Activated CD4-positive, alpha-beta memory T cell treated with anti-CD3 and anti-CD28 coated beads for 36 hours (primary cell): ENCODE measurements at regions of chr14 and their contacts with region 1.

Region 1: DNA sequence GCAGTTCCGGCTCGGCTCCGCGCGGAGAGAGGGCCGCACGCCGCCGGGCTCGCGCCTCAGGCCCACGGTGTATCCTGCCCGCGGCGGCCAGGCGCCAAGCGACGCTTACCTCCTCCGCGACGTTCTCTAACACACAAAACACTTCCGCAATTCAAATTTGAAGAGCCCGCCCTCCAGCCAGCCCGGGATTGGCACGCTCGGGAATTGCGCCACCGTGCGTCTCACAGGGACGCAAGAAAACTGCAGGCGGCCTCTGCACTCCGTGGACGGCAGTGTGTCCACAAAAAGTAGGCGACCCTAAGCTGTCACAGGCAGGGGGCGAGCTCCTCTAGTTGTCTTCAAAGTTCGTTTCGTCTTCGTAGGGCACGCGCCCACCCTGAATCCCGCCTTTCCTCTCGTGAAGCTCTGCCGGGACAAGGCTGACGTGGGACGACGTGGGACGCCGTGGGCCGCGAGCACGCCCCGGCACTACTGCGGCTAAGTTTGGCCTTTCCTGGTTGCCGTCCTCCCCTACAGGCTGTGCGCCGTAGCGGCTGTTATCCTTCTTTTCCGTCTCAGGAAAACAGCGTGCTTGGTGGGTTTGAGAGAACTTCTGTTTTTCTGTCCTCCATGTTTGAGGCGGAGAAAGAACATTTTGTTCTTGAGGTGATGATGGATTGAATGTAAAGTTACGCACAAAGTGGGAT is at the start of gene MIS18BP1:
- DNase-seq: peak; percentile 96
- H3K4me3 Mint-ChIP-seq: peak within 1 kb of the TSS; percentile 86
- H3K27ac Mint-ChIP-seq: peak within 1 kb of the TSS; percentile 95
- H3K4me1 Mint-ChIP-seq: peaks cover 17% of the 10 kb centered on the region
- H3K27me3 Mint-ChIP-seq: no peaks in the 10 kb centered on the region
- total RNA-seq, gene MIS18BP1: 53.7 to 58.5 TPM

Region 2: DNA sequence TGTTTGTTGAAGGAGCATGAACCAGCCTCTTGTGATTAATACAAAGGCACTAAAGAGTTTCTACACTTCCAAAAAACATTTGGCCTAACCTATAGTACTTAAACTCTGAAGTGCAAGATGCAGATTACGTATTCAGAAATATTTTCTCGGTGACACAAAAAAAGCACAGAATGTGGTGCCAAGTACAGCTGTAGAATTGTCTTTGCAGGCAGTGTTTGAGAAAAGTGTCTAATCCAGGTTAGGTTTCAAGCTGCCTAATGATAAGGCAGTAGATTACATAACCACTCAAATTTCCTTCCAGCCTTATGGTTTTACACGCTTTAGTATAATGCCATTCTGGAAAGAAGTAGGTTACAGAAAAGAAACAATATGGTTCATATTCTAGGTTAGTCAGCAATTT is 496.7 kb before region 1 on chr14:
- CTCF ChIA-PET with region 1: no interaction called
- POLR2A ChIA-PET with region 1: no interaction called
- intact Hi-C with region 1: no loop called
- DNase-seq: no peak
- H3K4me3 Mint-ChIP-seq: no peak overlapping the region
- H3K27ac Mint-ChIP-seq: no peak overlapping the region
- H3K4me1 Mint-ChIP-seq: no peaks in the 10 kb centered on the region
- H3K27me3 Mint-ChIP-seq: no peaks in the 10 kb centered on the region

Region 3: GRCh38 chr14:44912041-44912869 is 341.0 kb before region 1 on chr14:
- CTCF ChIA-PET with region 1: no interaction called
- POLR2A ChIA-PET with region 1: no interaction called
- intact Hi-C with region 1: loop called (anchors 5 kb)
- DNase-seq: no peak
- H3K4me3 Mint-ChIP-seq: no peak overlapping the region
- H3K27ac Mint-ChIP-seq: no peak overlapping the region
- H3K4me1 Mint-ChIP-seq: peaks cover 6% of the 10 kb centered on the region
- H3K27me3 Mint-ChIP-seq: peaks cover 23% of the 10 kb centered on the region

Region 4: DNA sequence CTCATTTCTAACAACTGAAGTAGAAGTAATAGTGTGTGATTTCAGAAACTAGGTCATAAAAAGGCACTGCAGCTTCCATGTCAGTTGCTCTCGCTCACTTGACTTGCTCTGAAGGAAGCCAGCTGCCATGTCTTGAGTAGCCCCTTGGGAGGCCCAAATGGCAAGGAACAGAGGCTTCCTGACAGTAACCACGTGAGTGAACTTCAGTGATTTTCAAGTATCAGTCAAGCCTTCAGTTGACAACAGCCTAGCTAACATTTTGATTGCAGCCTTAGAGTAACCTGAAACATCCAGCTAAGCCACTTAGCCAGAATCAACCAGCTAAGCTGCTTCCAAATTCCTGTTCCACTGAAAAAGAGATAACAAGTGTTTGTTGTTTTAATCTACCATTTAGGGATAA is 264.5 kb before region 1 on chr14:
- CTCF ChIA-PET with region 1: no interaction called
- POLR2A ChIA-PET with region 1: no interaction called
- intact Hi-C with region 1: no loop called
- DNase-seq: no peak
- H3K4me3 Mint-ChIP-seq: no peak overlapping the region
- H3K27ac Mint-ChIP-seq: no peak overlapping the region
- H3K4me1 Mint-ChIP-seq: peaks cover 5% of the 10 kb centered on the region
- H3K27me3 Mint-ChIP-seq: no peaks in the 10 kb centered on the region

Region 5: DNA sequence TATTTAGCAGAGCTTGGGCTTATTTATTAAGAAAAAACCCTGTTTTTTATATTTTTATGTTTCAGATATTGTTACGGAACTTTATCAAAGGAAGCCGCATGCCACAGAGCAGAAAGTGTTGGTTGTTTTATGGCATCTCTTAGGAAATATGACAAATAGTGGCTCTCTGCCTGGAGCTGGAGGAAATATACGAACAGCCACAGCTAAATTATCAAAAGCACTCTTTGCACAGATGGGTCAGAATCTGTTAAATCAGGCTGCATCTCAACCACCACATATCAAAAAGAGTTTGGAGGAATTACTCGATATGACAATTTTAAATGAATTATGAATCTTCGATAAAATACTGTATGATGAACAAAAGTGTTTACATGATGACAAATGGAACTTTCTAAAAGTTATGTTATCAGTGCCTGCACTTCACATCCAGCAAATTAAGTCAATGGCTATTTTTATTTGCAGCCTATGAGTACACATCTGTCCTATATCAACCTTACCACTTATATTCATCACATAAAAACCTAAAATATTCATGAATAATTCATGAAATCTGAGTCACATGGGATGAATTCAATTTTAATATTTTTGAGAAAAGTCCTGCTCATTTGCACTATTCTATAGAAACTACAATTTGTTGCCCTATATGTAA is 179.9 kb before region 1 on chr14:
- CTCF ChIA-PET with region 1: no interaction called
- POLR2A ChIA-PET with region 1: no interaction called
- intact Hi-C with region 1: no loop called
- DNase-seq: no peak
- H3K4me3 Mint-ChIP-seq: no peak overlapping the region
- H3K27ac Mint-ChIP-seq: no peak overlapping the region
- H3K4me1 Mint-ChIP-seq: no peaks in the 10 kb centered on the region
- H3K27me3 Mint-ChIP-seq: no peaks in the 10 kb centered on the region

Region 6: DNA sequence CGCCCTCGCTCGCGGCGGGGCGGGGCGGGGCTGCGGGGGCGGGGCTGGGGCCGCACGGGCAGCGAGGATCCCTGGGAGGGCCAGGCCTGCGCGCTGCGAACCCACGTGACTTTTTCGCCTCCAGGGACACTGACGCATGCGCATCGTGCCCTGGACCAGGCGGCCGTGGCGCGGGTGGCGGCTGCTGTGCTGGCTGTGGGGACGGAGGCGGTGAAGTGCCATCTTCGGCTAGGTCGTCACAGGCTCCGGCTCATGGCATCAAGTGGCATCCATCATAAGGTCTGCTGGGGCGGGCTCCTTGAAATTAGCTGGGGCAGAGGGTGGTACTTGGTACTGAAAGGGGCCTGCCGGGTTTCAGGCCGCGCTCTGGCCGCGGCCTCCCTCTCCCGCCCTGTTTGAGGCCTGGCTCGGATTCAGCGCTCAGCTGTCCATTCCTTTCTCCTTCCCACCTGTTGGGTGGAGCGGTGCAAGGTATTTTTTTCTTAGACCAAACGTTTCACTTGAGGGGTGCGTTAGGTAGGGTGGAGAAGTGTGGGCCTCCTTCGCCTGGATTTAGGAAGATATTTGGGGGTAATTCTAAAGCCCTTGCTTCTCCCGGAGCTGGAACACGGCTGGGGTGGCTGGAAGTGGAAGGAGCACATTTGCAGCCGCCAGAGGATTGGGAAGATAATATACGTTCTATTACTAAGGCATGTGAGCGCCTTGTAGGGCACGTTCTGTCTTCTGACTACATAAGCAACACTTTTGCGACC is 169.1 kb before region 1 on chr14 and contains the start of gene PRPF39:
- CTCF ChIA-PET with region 1: no interaction called
- POLR2A ChIA-PET with region 1: no interaction called
- intact Hi-C with region 1: loop called (anchors 1 kb)
- DNase-seq: peak; percentile 97
- H3K4me3 Mint-ChIP-seq: peak within 1 kb of the TSS; percentile 95
- H3K27ac Mint-ChIP-seq: peak within 1 kb of the TSS; percentile 95
- H3K4me1 Mint-ChIP-seq: peaks cover 41% of the 10 kb centered on the region
- H3K27me3 Mint-ChIP-seq: no peaks in the 10 kb centered on the region
- total RNA-seq, gene PRPF39: 38.9 to 40.9 TPM

Region 7: DNA sequence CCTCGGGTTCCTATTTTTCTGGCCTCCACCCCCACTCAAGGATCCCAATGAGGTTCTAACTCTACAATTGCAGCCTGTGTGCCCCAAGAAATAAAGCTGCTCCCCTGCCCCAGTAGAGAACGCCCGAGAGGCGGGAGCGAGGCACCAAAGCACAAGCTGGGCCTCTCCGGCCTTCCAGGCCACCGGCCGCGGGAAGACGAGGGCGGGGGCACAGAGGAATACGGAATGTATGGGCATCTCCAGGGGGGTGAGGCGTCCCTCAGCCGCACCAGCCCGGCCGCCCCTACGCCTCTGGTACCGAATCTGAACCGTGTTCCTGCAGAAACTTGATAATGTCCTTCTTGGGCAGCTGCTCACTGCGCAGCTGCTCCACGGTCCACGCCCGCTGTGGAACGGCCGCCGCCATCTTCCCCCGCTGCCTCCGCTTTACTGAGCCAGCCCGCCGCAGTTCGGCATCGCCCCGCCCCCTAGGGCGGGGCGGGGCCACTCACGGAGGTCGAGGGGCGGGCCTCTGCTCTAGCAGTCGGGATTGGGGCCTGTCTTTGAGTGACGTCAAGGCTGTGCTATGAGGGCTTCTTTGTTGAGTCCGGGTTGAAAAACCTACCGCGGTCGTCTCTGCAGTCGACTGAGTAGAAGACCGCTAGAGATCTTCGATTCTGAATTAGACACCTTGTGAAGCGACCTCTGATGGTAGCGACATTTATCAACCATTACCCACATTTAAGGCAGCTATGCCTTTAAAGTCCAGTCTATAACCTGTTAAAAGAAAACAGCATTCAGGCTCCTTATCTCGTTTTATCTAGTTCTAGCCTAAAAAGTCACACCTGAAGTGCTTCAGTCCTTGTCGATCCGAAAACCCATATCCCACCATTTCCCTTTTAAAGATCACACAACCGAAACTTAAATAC is 118.9 kb before region 1 on chr14 and contains the start of gene FKBP3:
- CTCF ChIA-PET with region 1: interaction called, 5 read pairs
- POLR2A ChIA-PET with region 1: interaction called, 8 read pairs
- intact Hi-C with region 1: loop called (anchors 1 kb)
- DNase-seq: peak; percentile 96
- H3K4me3 Mint-ChIP-seq: peak within 1 kb of the TSS; percentile 99
- H3K27ac Mint-ChIP-seq: peak within 1 kb of the TSS; percentile 98
- H3K4me1 Mint-ChIP-seq: peaks cover 28% of the 10 kb centered on the region
- H3K27me3 Mint-ChIP-seq: no peaks in the 10 kb centered on the region
- total RNA-seq, gene FKBP3: 71.2 to 72.4 TPM

Region 8: DNA sequence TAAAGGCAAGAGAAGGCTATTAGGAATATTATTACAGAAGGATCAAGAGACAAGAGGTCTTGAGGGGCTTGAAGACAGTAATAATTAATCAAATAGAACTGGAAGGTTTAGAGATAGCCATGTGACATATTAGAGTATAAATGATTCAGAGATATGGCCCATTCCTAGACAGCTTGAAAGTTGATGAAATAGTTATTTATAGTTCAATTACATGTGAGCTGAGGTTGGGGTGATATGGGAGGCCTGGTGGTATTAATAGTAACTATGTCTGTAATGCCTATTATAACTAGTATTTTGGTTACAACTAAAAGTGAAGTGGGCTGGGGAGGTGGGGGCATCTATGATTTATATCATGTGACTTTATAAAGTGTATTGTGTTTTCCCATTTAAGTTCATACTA is 13.9 kb after region 1 on chr14:
- CTCF ChIA-PET with region 1: interaction called, 11 read pairs
- POLR2A ChIA-PET with region 1: interaction called, 3 read pairs
- intact Hi-C with region 1: no loop called
- DNase-seq: no peak
- H3K4me3 Mint-ChIP-seq: no peak overlapping the region
- H3K27ac Mint-ChIP-seq: no peak overlapping the region
- H3K4me1 Mint-ChIP-seq: no peaks in the 10 kb centered on the region
- H3K27me3 Mint-ChIP-seq: peaks cover 6% of the 10 kb centered on the region

Region 9: GRCh38 chr14:45284802-45285201 is 31.6 kb after region 1 on chr14:
- CTCF ChIA-PET with region 1: no interaction called
- POLR2A ChIA-PET with region 1: no interaction called
- intact Hi-C with region 1: no loop called
- DNase-seq: no peak
- H3K4me3 Mint-ChIP-seq: no peak overlapping the region
- H3K27ac Mint-ChIP-seq: no peak overlapping the region
- H3K4me1 Mint-ChIP-seq: no peaks in the 10 kb centered on the region
- H3K27me3 Mint-ChIP-seq: peaks cover 6% of the 10 kb centered on the region